Calu3 (cell line): ENCODE measurements at regions of chr20 and their contacts with region 1.

Region 1: GRCh38 chr20:47713878-47714450 is 71.3 kb downstream of the SULF2 start:
- DNase-seq: no peak
- H3K4me3 Mint-ChIP-seq: no peak overlapping the region
- H3K27ac Mint-ChIP-seq: no peak overlapping the region
- H3K4me1 Mint-ChIP-seq: peaks cover 20% of the 10 kb centered on the region
- H3K27me3 Mint-ChIP-seq: no peaks in the 10 kb centered on the region
- CTCF ChIP-seq: no peak

Region 2: GRCh38 chr20:47677635-47678453 is 36.1 kb before region 1 on chr20:
- CTCF ChIA-PET with region 1: interaction called, 5 read pairs
- intact Hi-C with region 1: loop called (anchors 1 kb)
- DNase-seq: peak; percentile 87
- H3K4me3 Mint-ChIP-seq: no peak overlapping the region
- H3K27ac Mint-ChIP-seq: no peak overlapping the region
- H3K4me1 Mint-ChIP-seq: no peaks in the 10 kb centered on the region
- H3K27me3 Mint-ChIP-seq: no peaks in the 10 kb centered on the region
- CTCF ChIP-seq: peak; percentile 98

Region 3: DNA sequence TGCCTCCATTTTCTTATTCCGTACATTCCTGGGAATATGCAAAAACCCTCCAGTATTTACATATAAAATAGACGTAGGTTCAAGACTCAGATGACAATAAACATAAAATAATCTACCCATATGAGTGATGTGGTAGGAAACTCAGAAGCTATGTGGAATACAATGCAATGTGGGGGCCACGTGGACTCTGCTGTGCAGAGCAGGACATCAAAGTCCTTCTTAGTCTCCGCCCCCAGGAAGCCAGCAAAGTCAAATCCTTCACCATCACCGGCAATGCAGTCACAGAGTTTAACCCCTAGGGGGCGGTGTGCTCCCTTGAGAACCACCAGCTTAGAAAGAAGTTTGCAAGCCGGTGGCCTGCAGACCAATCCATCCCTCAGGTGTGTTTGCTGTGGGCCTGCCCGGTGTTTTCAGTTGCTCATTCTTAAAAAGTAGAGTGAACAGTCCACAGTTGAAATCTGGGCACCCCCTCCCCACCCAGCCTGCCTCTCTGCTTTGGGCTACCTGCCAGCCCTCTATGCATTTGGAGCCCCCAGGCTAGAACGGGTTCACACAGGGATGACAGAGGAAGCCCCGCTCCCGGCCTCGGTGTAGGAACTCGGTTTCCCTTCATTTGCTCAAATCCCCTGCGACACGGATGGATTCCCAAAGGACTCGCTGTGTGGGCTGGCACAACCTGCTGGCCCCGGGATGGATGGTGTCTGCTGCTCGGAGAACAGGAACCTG is 11.4 kb after region 1 on chr20:
- CTCF ChIA-PET with region 1: interaction called, 18 read pairs
- intact Hi-C with region 1: no loop called
- DNase-seq: peak; percentile 93
- H3K4me3 Mint-ChIP-seq: no peak overlapping the region
- H3K27ac Mint-ChIP-seq: no peak overlapping the region
- H3K4me1 Mint-ChIP-seq: no peaks in the 10 kb centered on the region
- H3K27me3 Mint-ChIP-seq: no peaks in the 10 kb centered on the region
- CTCF ChIP-seq: peak; percentile 95